Heart left ventricle (tissue), 16 donors: ENCODE measurements at regions of chr13 and their contacts with region 1.

Region 1: GRCh38 chr13:77274126-77274525 is 52.8 kb downstream of the MYCBP2 start:
- DNase-seq: no peak
- ATAC-seq: no peak
- H3K4me3 ChIP-seq: no peak overlapping the region
- H3K27ac ChIP-seq: no peak overlapping the region
- H3K4me1 ChIP-seq: no peaks in the 10 kb centered on the region
- H3K27me3 ChIP-seq: no peaks in the 10 kb centered on the region
- CTCF ChIP-seq: peak in 4 of 12 donors; percentile 10 to 36 (median 26)
- POLR2A ChIP-seq: no peak

Region 2: DNA sequence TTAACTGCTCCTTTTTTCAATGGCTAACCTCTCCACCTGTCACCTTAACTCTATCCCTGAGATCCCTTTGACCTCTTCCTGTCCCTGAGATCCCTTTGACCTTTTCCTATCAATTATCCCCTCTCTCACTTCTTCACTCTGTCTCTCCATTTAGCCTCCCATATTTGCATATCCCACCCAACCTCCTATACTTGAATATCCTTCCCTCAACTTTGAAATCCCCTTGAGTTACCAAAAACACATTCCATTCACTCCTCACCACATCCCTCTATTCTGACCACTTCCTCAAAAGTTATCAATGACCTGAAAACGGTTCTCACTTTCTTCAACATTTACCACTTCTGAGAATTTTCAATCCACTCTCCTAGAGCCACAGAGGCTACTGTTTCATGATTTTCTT is 49.7 kb after region 1 on chr13:
- intact Hi-C with region 1: loop called in 3 of 10 experiments (anchors 5 to 10 kb)
- DNase-seq: no peak
- ATAC-seq: no peak
- H3K4me3 ChIP-seq: peak overlapping the region in 1 of 12 donors; percentile 91
- H3K27ac ChIP-seq: no peak overlapping the region
- H3K4me1 ChIP-seq: peaks cover 3 to 75% (median 45%) of the 10 kb centered on the region in 12 donors
- H3K27me3 ChIP-seq: no peaks in the 10 kb centered on the region
- CTCF ChIP-seq: no peak
- POLR2A ChIP-seq: no peak

Region 3: GRCh38 chr13:77329133-77329910 is 55.2 kb after region 1 on chr13:
- intact Hi-C with region 1: loop called in 3 of 10 experiments (anchors 5 to 10 kb)
- DNase-seq: peak; percentile 83 to 89 (median 85)
- ATAC-seq: peak; percentile 79 to 89 (median 86)
- H3K4me3 ChIP-seq: peak overlapping the region; percentile 70 to 88 (median 79)
- H3K27ac ChIP-seq: peak overlapping the region; percentile 59 to 96 (median 86)
- H3K4me1 ChIP-seq: peaks cover 4 to 38% (median 25%) of the 10 kb centered on the region in 12 donors
- H3K27me3 ChIP-seq: no peaks in the 10 kb centered on the region
- CTCF ChIP-seq: no peak
- POLR2A ChIP-seq: no peak

Region 4: GRCh38 chr13:77345150-77345780 is 71.1 kb after region 1 on chr13:
- intact Hi-C with region 1: loop called in 1 of 10 experiments (anchors 2 kb)
- DNase-seq: no peak
- ATAC-seq: no peak
- H3K4me3 ChIP-seq: no peak overlapping the region
- H3K27ac ChIP-seq: no peak overlapping the region
- H3K4me1 ChIP-seq: peaks cover 0 to 15% (median 0%) of the 10 kb centered on the region in 12 donors
- H3K27me3 ChIP-seq: peaks cover 0 to under 1% (median 0%) of the 10 kb centered on the region in 9 donors
- CTCF ChIP-seq: no peak
- POLR2A ChIP-seq: no peak

Region 5: GRCh38 chr13:77480066-77480465 is 205.9 kb after region 1 on chr13:
- intact Hi-C with region 1: loop called in 3 of 10 experiments (anchors 5 to 10 kb)
- DNase-seq: no peak
- ATAC-seq: no peak
- H3K4me3 ChIP-seq: no peak overlapping the region
- H3K27ac ChIP-seq: no peak overlapping the region
- H3K4me1 ChIP-seq: peaks cover 0 to 6% (median 0%) of the 10 kb centered on the region in 12 donors
- H3K27me3 ChIP-seq: no peaks in the 10 kb centered on the region
- CTCF ChIP-seq: no peak
- POLR2A ChIP-seq: no peak